ENCODE measurements at regions of chr1 and their contacts with region 1.

Region 1: DNA sequence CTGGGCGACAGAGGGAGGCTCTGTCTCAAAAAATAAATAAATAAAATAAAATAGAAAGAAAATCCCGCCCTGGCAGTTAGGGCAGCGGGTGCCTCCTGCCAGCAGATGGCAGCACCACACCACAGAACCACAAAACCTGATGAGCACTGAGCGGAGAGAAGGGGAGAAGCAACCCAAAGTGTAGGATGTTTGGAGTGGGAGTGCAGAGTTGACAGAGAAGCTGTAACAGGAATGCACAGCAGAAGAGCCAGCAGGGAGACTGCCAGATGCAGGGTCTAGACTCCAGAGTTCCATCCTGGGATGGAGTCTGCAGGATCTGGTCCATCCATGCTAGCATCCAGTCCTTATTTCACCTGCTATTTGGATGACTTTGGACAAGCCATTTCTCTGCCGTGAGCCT is 29.7 kb upstream of the KIRREL1 start:
- DNase-seq: peak; percentile 66
- ATAC-seq: peak; percentile 78
- H3K4me3 ChIP-seq: no peak overlapping the region
- H3K27ac ChIP-seq: no peak overlapping the region
- H3K4me1 ChIP-seq: peaks cover 13% of the 10 kb centered on the region
- H3K27me3 ChIP-seq: peaks cover 13% of the 10 kb centered on the region
- CTCF ChIP-seq: peak; percentile 94
- POLR2A ChIP-seq: 0 out of 2 replicates have a peak, but pooled peaks have one; percentile 37
- RAD21 ChIP-seq: peak; percentile 95

Region 2: DNA sequence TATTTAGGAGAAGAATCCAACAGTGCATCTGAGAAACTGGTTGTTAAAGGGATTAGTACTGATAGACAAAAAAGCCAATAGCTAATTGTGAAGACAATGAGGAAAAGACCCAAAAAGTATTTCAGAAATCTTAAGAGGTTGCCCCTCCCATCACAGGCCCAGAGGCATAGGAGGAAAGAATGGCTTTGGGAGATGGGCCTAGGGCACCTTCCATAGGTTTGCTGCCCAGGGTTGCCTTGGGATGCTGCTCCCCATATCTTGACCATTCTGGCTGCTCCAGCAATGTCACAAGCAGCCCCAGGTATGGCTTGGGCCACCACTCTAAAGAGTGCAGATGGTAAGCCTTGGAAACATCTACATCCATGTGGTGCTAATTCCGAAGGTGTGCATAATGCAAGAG is 53.4 kb before region 1 on chr1:
- CTCF ChIA-PET with region 1: no interaction called
- POLR2A ChIA-PET with region 1: no interaction called
- dilution Hi-C with region 1: no loop called
- in situ Hi-C with region 1: no loop called
- intact Hi-C with region 1: no loop called
- DNase-seq: no peak
- ATAC-seq: no peak
- H3K4me3 ChIP-seq: no peak overlapping the region
- H3K27ac ChIP-seq: no peak overlapping the region
- H3K4me1 ChIP-seq: no peaks in the 10 kb centered on the region
- H3K27me3 ChIP-seq: no peaks in the 10 kb centered on the region
- CTCF ChIP-seq: no peak
- POLR2A ChIP-seq: no peak
- RAD21 ChIP-seq: no peak

Region 3: DNA sequence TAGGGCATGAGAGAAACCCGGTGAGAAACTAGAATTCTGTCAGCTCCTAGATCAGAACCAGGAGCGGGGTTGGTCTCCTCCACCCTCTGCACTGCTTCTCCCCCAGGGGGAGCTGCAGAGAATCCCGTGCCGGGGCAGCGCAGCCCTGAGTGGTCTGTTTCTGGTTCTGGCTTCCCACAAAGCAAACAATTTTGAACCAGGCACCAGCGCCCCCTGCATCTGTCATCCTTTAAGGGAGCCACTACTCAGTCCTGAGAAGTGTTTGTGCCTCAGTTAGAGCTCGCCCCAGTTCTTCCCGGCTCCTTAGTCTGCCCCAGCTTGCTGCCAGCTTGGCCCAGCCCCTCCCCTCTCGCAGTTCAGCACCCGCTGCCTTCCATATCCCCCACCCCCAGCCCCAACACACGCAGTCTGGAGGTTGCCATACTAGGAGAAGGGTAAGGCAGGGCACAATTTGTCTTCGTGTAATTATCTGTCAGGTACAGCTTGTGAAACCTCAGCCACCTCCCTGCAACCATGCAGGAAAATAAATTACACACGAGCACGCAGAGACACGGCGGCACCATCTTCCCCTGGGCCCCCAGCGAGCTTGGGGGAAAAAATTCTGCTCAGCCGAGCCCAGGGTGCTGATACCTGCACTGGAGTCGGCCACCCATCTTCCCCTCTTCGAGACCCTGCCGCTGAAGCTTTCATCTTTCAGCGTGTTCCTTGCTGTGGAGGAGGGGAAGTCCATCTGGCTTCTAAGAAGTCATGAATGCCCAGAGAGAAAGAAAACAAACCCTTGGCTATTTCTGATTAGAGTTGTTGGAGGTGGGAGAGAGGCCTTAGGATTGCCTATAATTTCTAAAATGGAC is 154.4 kb after region 1 on chr1:
- CTCF ChIA-PET with region 1: interaction called, 47 read pairs
- POLR2A ChIA-PET with region 1: no interaction called
- dilution Hi-C with region 1: no loop called
- in situ Hi-C with region 1: loop called (anchors 5 kb)
- intact Hi-C with region 1: loop called (anchors 2 kb)
- DNase-seq: peak; percentile 34
- ATAC-seq: peak; percentile 78
- H3K4me3 ChIP-seq: peak overlapping the region; percentile 7
- H3K27ac ChIP-seq: no peak overlapping the region
- H3K4me1 ChIP-seq: no peaks in the 10 kb centered on the region; the same call in 1 of the 2 replicates
- H3K27me3 ChIP-seq: peaks cover 37% of the 10 kb centered on the region
- CTCF ChIP-seq: peak; percentile 59
- POLR2A ChIP-seq: no peak
- RAD21 ChIP-seq: peak; percentile 34

Region 4: GRCh38 chr1:158527190-158527815 is 563.6 kb after region 1 on chr1:
- CTCF ChIA-PET with region 1: no interaction called
- POLR2A ChIA-PET with region 1: no interaction called
- dilution Hi-C with region 1: no loop called
- in situ Hi-C with region 1: no loop called
- intact Hi-C with region 1: loop called (anchors 10 kb)
- DNase-seq: peak; percentile 27
- ATAC-seq: no peak
- H3K4me3 ChIP-seq: no peak overlapping the region
- H3K27ac ChIP-seq: no peak overlapping the region
- H3K4me1 ChIP-seq: no peaks in the 10 kb centered on the region
- H3K27me3 ChIP-seq: no peaks in the 10 kb centered on the region
- CTCF ChIP-seq: peak; percentile 41
- POLR2A ChIP-seq: no peak
- RAD21 ChIP-seq: no peak

Region 5: DNA sequence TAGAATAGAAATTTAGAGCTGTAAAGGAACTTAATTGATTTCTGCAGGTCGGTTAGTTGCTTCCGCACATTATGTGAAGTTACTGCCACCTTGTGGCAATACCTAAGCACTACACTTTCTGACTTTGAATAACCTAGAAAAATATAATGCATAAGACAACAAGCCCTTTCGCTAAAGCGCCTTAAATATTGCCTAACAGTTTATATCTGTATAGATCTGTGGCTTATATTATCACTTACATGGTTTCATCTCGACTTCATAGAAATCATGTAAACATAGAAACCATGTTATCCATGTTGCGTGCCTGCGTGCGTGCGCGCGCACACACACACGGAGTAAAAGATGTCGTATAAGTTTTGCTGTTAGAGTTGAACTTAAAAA is 1035.1 kb after region 1 on chr1:
- CTCF ChIA-PET with region 1: no interaction called
- POLR2A ChIA-PET with region 1: no interaction called
- dilution Hi-C with region 1: no loop called
- in situ Hi-C with region 1: loop called (anchors 10 kb)
- intact Hi-C with region 1: loop called (anchors 2 kb)
- DNase-seq: peak; percentile 61
- ATAC-seq: peak; percentile 59
- H3K4me3 ChIP-seq: peak overlapping the region; percentile 61
- H3K27ac ChIP-seq: peak overlapping the region; percentile 36; the same call in 1 of the 2 replicates
- H3K4me1 ChIP-seq: no peaks in the 10 kb centered on the region
- H3K27me3 ChIP-seq: no peaks in the 10 kb centered on the region
- CTCF ChIP-seq: peak; percentile 90
- POLR2A ChIP-seq: no peak
- RAD21 ChIP-seq: peak; percentile 78

Region 6: GRCh38 chr1:159009704-159010361 is 1046.1 kb after region 1 on chr1 and contains the start of gene IFI16:
- CTCF ChIA-PET with region 1: no interaction called
- POLR2A ChIA-PET with region 1: no interaction called
- dilution Hi-C with region 1: no loop called
- in situ Hi-C with region 1: loop called (anchors 10 kb)
- intact Hi-C with region 1: no loop called
- DNase-seq: peak; percentile 96
- ATAC-seq: peak; percentile 93
- H3K4me3 ChIP-seq: peak within 1 kb of the TSS; percentile 90
- H3K27ac ChIP-seq: peak within 1 kb of the TSS; percentile 96
- H3K4me1 ChIP-seq: peaks cover 14% of the 10 kb centered on the region
- H3K27me3 ChIP-seq: no peaks in the 10 kb centered on the region
- CTCF ChIP-seq: no peak
- POLR2A ChIP-seq: peak; percentile 57; the same call in 1 of the 2 replicates
- RAD21 ChIP-seq: no peak
- total RNA-seq, gene IFI16: 45.0 and 60.3 TPM in 2 replicates

Region 7: DNA sequence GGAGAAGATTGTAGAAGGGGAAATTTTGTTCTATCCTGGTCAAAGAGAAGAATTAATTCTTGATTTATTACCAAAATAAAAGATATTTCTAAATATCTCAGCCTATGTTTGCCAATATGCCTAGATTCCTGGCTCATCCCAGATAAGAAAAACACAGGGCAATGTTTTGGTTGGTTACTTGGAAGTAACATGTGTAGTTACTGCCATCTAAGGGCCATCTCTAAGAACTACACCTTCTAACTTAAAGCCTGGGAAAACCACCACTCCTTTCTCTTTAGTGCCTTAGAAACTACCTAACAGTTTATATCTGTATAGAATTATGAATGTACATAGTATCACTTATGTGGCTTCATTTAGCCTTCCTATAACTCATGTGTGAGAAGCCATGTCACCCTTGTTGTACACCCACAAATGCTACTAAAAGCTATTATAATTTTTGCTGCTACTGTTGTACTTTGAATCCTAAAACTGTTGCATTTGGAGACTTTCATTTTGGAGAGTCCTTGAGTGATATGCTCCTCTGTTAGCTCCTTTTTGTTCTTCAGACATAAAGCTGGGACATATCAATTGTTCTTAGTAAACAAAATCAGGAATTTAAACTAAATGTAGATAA is 1108.4 kb after region 1 on chr1:
- CTCF ChIA-PET with region 1: no interaction called
- POLR2A ChIA-PET with region 1: no interaction called
- dilution Hi-C with region 1: no loop called
- in situ Hi-C with region 1: no loop called
- intact Hi-C with region 1: loop called (anchors 5 kb)
- DNase-seq: peak; percentile 80
- ATAC-seq: peak; percentile 99
- H3K4me3 ChIP-seq: no peak overlapping the region
- H3K27ac ChIP-seq: no peak overlapping the region
- H3K4me1 ChIP-seq: no peaks in the 10 kb centered on the region
- H3K27me3 ChIP-seq: no peaks in the 10 kb centered on the region
- CTCF ChIP-seq: peak; percentile 78
- POLR2A ChIP-seq: no peak
- RAD21 ChIP-seq: peak; percentile 83

Region 8: GRCh38 chr1:159089184-159089791 is 1125.6 kb after region 1 on chr1:
- CTCF ChIA-PET with region 1: no interaction called
- POLR2A ChIA-PET with region 1: no interaction called
- dilution Hi-C with region 1: no loop called
- in situ Hi-C with region 1: loop called (anchors 10 kb)
- intact Hi-C with region 1: no loop called
- DNase-seq: no peak
- ATAC-seq: no peak
- H3K4me3 ChIP-seq: no peak overlapping the region
- H3K27ac ChIP-seq: no peak overlapping the region
- H3K4me1 ChIP-seq: peaks cover 12% of the 10 kb centered on the region
- H3K27me3 ChIP-seq: peaks cover 2% of the 10 kb centered on the region; the same call in 1 of the 2 replicates
- CTCF ChIP-seq: peak; percentile 21
- POLR2A ChIP-seq: no peak
- RAD21 ChIP-seq: no peak